ENCODE measurements at regions of chr5 and their contacts with region 1.

Region 1: GRCh38 chr5:170341545-170341944 is 44.0 kb upstream of the LCP2 start:
- DNase-seq: no peak

Region 2: GRCh38 chr5:170403675-170404074 is 62.1 kb after region 1 on chr5:
- intact Hi-C with region 1: loop called in 1 of 2 experiments (anchors 2 kb)
- DNase-seq: no peak